Prostate gland (tissue), 2 donors: ENCODE measurements at regions of chr16 and their contacts with region 1.

Region 1: GRCh38 chr16:85717393-85718121 is 28.8 kb upstream of the GINS2 start:
- DNase-seq: peak; percentile 67
- H3K4me3 ChIP-seq: no peak overlapping the region
- H3K27ac ChIP-seq: no peak overlapping the region
- H3K4me1 ChIP-seq: no peaks in the 10 kb centered on the region
- H3K27me3 ChIP-seq: no peaks in the 10 kb centered on the region
- CTCF ChIP-seq: peak; percentile 63 to 91 (median 75)
- POLR2A ChIP-seq: no peak

Region 2: DNA sequence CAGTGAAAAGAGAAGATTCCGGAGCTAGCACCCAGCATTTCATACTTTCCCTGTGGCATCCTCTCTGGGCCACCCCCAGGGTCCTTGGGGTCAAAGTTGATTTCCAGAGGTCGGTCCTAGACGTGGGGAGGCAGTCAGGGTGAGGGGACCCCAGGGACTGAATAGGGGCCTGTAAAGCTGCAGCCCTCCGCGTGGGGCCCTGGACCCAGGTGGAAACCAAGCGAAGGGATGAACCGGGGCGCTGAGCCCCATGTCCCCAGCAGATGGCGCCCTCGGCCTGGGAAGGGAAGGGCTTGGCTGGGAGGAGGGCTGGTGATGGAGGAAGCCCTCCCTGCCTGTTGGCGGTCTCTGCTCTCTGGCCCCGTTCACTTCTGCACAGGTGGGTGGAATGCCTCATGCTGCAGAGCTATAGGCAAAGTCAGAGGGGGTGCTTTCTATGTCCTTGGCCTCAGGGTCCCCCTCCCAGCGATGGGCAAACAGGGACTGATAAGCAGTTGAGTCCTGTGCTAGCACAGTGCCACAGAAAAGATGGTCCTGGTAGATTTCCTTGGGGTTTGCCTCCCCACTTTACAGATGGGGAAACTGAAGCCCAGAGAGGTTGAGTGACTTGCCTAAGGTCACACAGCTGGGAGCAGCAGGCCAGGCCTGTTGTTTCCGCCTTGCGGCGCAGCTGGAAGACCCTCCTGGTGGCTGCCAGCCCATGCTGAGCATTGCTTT is 441.9 kb before region 1 on chr16:
- intact Hi-C with region 1: loop called (anchors 5 kb)
- DNase-seq: peak; percentile 48
- H3K4me3 ChIP-seq: no peak overlapping the region
- H3K27ac ChIP-seq: no peak overlapping the region
- H3K4me1 ChIP-seq: no peaks in the 10 kb centered on the region
- H3K27me3 ChIP-seq: no peaks in the 10 kb centered on the region
- CTCF ChIP-seq: peak; percentile 76 to 93 (median 84)
- POLR2A ChIP-seq: no peak

Region 3: DNA sequence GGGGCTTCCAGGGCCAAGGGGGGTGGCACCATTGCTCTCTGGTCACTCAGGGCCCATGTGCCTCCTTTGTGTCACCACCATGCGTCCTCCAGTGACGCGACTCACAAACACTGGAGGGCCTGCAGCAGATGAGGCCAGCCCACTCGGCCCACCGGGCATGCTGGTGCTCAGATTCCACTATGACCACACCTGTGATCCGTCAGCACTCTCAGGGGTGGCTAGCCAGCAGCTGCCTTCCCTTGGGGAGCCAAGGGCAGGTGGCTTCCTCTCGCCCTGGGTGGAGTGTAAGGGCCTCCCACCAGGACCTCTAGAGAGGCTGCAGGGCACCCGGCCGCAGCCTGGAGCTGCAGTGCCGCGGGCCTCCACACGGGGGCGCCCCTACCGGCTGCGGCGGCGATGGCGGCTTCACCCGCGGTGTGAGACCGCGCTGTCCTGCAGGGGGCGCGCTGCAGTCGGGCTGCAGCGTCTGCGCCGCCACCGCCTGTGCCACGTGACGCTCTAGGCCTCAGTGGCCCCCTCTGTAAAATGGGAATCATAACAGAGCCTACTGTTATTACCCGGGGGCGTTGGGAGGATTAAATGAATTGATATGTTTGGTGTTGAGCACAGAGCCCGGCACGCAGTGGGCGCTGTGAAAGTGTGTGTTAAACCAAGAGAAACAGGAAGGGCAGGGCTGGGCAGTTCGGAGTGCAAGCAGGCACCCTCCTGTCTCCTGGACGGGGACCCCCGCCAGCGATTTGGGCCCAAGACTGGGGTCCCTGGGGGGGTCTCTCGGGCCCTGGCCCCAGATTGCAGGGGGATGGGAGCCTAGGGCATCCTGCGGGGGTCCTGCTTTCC is 296.8 kb before region 1 on chr16:
- intact Hi-C with region 1: loop called (anchors 10 kb)
- DNase-seq: no peak
- H3K4me3 ChIP-seq: no peak overlapping the region
- H3K27ac ChIP-seq: no peak overlapping the region
- H3K4me1 ChIP-seq: peaks cover 2% of the 10 kb centered on the region
- H3K27me3 ChIP-seq: no peaks in the 10 kb centered on the region
- CTCF ChIP-seq: peak; percentile 83 to 97 (median 94)
- POLR2A ChIP-seq: no peak

Region 4: GRCh38 chr16:85503679-85504231 is 213.8 kb before region 1 on chr16:
- intact Hi-C with region 1: loop called (anchors 10 kb)
- DNase-seq: no peak
- H3K4me3 ChIP-seq: no peak overlapping the region
- H3K27ac ChIP-seq: no peak overlapping the region
- H3K4me1 ChIP-seq: no peaks in the 10 kb centered on the region
- H3K27me3 ChIP-seq: no peaks in the 10 kb centered on the region
- CTCF ChIP-seq: no peak
- POLR2A ChIP-seq: no peak

Region 5: GRCh38 chr16:85673529-85674417 is 43.8 kb before region 1 on chr16:
- intact Hi-C with region 1: loop called (anchors 5 kb)
- DNase-seq: peak; percentile 83
- H3K4me3 ChIP-seq: no peak overlapping the region
- H3K27ac ChIP-seq: peak overlapping the region; percentile 71 to 72
- H3K4me1 ChIP-seq: peaks cover 15% of the 10 kb centered on the region
- H3K27me3 ChIP-seq: no peaks in the 10 kb centered on the region
- CTCF ChIP-seq: no peak
- POLR2A ChIP-seq: no peak